Activated T-helper 2 cell treated with anti-CD3 and anti-CD28 coated beads, Interferon-gamma antibody, Interleukin-2, Interleukin-4, amounts not matched to agents 10 μg/mL and 5 μg/mL and 100 μg/mL, durations not matched to agents 14 hours and 24 hours and 36 hours (primary cell): ENCODE measurements at regions of chr6 and their contacts with region 1.

Region 1: DNA sequence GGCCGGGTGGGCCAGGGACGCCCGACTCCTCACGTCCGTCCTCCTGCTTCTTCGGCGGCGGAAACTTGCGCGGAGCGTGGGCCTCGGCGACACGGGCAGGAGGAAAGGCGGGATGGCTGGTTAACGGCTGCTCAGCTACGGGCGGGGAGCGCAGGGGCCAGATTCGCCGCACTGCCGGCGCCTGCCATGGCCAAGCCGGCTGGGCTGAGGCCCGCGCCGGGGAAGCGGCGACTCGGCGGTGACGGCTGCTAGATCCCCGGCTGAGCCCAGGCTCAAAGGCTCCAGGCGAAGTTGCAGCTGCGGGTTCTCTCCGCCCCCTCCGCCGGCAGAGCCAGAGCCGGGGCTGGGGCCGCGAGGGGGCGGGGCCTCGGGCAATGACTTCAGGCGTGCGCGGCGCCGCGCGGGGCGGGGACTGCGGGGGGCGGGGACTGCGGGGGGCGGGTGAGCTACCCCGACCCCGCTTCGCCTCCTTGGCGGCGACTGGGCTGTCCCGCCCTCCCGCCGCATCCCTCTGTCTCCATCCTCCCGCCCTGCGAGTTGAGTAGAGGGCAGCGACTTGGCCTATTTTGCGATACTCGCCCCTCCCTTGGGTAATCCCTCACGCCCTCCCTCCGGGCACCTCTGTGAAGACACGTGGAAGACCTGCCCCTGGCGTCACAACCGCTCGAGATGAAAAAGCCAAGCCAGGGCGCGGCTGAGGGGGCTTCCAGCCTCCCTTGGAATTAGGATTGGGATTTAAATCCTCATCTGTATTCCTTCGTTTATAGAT is at the start of gene CEP85L:
- DNase-seq: peak; percentile 85
- H3K4me3 Mint-ChIP-seq: peak within 1 kb of the TSS; percentile 84
- H3K27ac Mint-ChIP-seq: peak within 1 kb of the TSS; percentile 89
- H3K4me1 Mint-ChIP-seq: peaks cover 36% of the 10 kb centered on the region
- H3K27me3 Mint-ChIP-seq: no peaks in the 10 kb centered on the region
- total RNA-seq, gene CEP85L: 34.2 and 36.7 TPM in 2 replicates

Region 2: DNA sequence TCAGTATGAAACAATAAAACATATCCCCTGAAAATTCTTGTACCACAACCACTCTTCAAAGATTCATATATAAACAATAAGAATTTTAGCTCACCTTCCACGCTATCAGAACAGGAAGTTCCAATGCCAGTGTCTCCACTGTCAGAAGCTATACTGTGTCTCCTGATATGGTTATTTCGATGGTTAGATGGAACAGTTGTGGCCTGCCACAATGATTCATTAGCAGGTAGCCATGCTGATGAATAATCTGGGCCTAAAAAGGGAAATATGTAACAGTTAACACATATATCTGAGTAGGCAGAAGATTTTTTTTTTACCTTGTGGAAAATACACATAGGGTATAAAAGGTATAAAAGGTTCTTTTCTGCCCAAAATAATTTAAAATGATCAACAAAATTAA is 19.1 kb before region 1 on chr6:
- intact Hi-C with region 1: loop called (anchors 2 kb)
- DNase-seq: no peak
- H3K4me3 Mint-ChIP-seq: no peak overlapping the region
- H3K27ac Mint-ChIP-seq: peak overlapping the region; percentile 17
- H3K4me1 Mint-ChIP-seq: peaks cover 20% of the 10 kb centered on the region
- H3K27me3 Mint-ChIP-seq: no peaks in the 10 kb centered on the region

Region 3: GRCh38 chr6:118663993-118664985 is 12.8 kb after region 1 on chr6:
- intact Hi-C with region 1: loop called (anchors 1 kb)
- DNase-seq: no peak
- H3K4me3 Mint-ChIP-seq: peak overlapping the region; percentile 86
- H3K27ac Mint-ChIP-seq: peak overlapping the region; percentile 96
- H3K4me1 Mint-ChIP-seq: peaks cover 58% of the 10 kb centered on the region
- H3K27me3 Mint-ChIP-seq: no peaks in the 10 kb centered on the region

Region 4: DNA sequence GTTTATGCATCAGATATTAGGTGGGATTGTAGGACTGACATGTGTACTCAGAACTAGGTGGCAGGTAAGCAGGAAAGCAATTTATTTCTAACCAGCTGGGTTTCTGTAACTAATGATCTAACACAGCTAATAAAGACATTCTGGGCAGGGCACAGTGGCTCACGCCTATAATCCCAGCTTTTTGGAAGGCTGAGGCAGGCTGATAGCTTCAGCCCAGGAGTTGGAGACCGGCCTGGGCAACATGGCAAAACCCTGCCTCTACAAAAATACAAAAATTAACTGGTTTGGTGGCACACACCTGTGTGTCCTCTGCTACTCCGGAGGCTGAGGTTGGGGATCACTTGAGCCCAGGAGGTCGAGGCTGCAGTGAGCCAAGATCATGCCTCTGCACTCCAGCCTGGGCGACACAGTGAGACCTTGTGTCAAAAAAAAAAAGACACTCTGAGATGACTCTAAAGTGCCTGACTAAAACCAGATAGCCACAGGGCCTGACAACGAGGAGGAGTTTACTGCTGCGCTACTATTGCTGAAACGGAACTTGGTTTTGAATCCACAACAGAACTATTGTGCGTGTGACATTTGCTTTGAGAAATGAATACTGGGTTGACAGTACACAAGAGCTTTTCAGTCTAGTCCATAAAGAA is 29.1 kb after region 1 on chr6:
- intact Hi-C with region 1: loop called (anchors 1 kb)
- DNase-seq: no peak
- H3K4me3 Mint-ChIP-seq: peak overlapping the region; percentile 35
- H3K27ac Mint-ChIP-seq: peak overlapping the region; percentile 81
- H3K4me1 Mint-ChIP-seq: peaks cover 54% of the 10 kb centered on the region
- H3K27me3 Mint-ChIP-seq: no peaks in the 10 kb centered on the region